H1 (cell line): ENCODE measurements at regions of chr19 and their contacts with region 1.

Region 1: DNA sequence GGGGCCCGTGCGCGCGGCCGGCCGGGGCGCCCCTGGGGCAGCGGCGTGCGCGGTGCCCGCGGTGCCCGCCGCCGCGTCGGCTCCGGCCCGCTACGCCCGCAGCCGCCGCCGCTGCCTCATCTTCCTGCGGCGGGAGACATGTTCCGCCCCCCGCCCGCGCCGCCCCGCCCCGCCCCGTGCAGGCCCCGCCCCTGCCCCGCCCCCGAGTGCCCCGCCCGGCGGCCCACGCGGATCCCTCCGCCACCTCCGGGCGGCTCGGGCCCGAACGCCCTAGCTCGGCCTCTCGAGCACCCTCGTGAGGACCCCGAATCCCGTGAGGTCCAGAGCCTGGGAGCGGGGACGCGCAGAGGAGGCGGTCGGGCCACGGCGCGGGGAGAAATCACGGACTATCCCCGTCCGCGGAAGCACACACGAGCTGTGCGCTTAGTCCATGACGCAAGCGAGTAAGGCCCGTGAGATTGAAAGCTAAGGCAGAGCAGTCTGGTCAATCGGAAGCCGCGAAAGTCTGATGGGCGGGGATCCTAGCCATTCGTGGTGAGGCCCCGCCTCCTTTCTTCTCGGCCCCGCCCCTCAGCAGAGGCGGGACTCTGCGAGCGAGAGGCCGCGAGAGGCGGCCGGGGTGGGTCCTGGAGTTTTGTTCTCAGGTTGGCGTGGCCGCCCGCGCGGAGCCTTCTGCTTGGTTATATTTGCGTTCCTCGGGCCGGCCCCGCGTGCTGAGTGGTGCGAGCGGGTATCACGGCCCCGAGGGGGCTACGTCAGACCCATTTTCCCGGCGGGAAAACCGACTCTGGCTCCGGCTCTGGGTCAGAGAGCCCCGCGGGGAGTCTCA is at the start of gene TCF3:
- DNase-seq: peak; percentile 98
- H3K4me3 ChIP-seq: peak within 1 kb of the TSS; percentile 69 to 84 (median 74)
- H3K27ac ChIP-seq: peak within 1 kb of the TSS; percentile 100
- H3K4me1 ChIP-seq: peaks cover 0 to 20% (median 4%) of the 10 kb centered on the region in 4 experiments; a peak in 6 of 7 replicates
- H3K27me3 ChIP-seq: no peaks in the 10 kb centered on the region; a peak in 1 of 7 replicates
- CTCF ChIP-seq: no peak
- EP300 ChIP-seq: no peak
- POLR2A ChIP-seq: peak in 1 of 2 experiments; percentile 52; a peak in 2 of 3 replicates
- RAD21 ChIP-seq: no peak
- total RNA-seq, gene TCF3: 340 and 348 TPM in 2 replicates

Region 2: GRCh38 chr19:1632462-1633268 is 20.0 kb before region 1 on chr19:
- CTCF ChIA-PET with region 1: no interaction called
- POLR2A ChIA-PET with region 1: interaction called, 25 read pairs
- DNase-seq: no peak
- H3K4me3 ChIP-seq: no peak overlapping the region
- H3K27ac ChIP-seq: no peak overlapping the region
- H3K4me1 ChIP-seq: no peaks in the 10 kb centered on the region
- H3K27me3 ChIP-seq: no peaks in the 10 kb centered on the region
- CTCF ChIP-seq: no peak
- EP300 ChIP-seq: no peak
- POLR2A ChIP-seq: no peak
- RAD21 ChIP-seq: no peak

Region 3: DNA sequence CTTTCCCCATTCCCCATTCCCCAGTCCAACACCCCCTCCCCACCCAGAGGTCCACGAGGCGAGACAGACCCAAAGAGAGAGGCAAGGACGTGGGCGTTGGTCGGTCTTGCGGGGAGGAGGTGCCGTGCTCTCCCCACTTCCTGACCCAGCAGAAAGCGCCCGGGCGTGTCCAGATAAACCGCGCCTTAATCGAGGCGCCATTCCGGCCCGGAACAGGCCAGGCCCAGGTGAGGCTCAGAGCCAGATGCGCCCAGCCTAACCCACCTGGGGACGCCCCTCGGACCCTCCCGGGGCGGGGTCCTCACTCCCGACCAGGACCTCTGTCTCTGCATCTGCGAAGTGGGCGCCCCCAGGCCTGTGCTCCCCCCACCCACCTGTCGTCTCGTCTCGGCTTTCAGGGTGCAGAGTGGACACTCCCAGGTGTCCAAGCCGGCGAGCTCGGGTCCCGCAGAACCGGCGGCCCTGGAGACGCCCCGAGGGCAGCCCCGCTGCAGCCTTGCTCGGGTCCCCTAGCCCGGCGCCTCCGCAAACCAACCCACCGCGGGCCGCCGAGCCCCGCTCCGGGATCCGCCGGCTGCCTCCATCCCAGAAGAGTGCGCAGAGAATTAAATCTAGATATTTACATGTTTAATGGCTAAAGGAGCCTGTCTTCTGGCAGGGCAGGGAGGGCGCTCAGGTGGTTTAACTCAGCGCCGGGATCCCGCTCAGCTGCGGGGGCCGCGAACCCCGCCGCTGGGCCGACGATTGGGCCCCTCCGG is 95.6 kb after region 1 on chr19:
- CTCF ChIA-PET with region 1: no interaction called
- POLR2A ChIA-PET with region 1: no interaction called
- DNase-seq: peak in 1 of 2 experiments; percentile 88
- H3K4me3 ChIP-seq: peak overlapping the region; percentile 20 to 59 (median 28); a peak in 4 of 8 replicates
- H3K27ac ChIP-seq: no peak overlapping the region
- H3K4me1 ChIP-seq: peaks cover 0 to 49% (median 27%) of the 10 kb centered on the region in 4 experiments; a peak in 6 of 7 replicates
- H3K27me3 ChIP-seq: peaks cover 75 to 94% (median 86%) of the 10 kb centered on the region in 4 experiments
- CTCF ChIP-seq: no peak
- EP300 ChIP-seq: no peak
- POLR2A ChIP-seq: no peak
- RAD21 ChIP-seq: no peak